ENCODE measurements at regions of chrX and their contacts with region 1.

Region 1: DNA sequence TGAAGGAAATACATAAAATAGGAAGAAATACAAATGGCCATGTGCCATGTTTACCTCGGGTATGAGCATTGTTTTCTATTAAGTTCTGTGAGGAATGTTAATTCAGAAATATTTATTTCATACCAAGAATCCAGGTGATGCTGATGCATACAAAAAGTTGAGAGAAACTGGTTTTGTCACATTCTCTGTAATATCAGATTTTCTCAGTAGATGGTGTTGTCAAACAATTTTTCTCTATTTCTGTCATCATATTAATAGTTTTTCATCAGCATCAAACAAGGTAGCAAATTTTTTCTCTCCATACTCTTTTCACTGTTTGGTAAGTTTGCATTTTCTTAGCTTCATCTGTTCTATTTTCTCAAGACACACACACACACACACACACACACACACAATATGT is 179.8 kb downstream of the KLHL4 start:
- DNase-seq: no peak
- ATAC-seq: no peak
- H3K4me3 ChIP-seq: no peak overlapping the region
- H3K27ac ChIP-seq: no peak overlapping the region
- H3K4me1 ChIP-seq: no peaks in the 10 kb centered on the region
- H3K27me3 ChIP-seq: no peaks in the 10 kb centered on the region
- CTCF ChIP-seq: peak in 1 of 12 donors; percentile 9
- POLR2A ChIP-seq: no peak

Region 2: DNA sequence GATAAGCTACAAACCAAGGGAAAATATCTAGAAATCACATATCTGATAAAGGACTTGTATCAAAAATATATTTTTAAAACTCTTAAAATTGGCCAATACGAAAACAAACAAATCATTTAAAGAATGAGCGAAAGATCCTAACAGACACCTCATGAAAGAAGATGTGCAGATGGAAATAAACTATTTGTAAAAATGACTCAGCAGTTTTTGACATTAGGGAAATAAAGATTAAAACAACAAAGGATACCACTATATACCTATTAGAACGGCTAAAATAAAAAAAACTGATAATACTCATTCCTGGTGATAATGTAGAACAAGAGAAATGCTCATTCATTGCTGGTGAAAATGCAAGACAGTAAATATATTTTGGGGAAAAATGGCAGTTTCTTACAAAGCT is 326.6 kb after region 1 on chrX:
- intact Hi-C with region 1: no loop called
- DNase-seq: no peak
- ATAC-seq: no peak
- H3K4me3 ChIP-seq: no peak overlapping the region
- H3K27ac ChIP-seq: no peak overlapping the region
- H3K4me1 ChIP-seq: no peaks in the 10 kb centered on the region
- H3K27me3 ChIP-seq: no peaks in the 10 kb centered on the region
- CTCF ChIP-seq: no peak
- POLR2A ChIP-seq: no peak

Region 3: GRCh38 chrX:88613338-88613737 is 915.9 kb after region 1 on chrX:
- intact Hi-C with region 1: loop called in 1 of 10 experiments (anchors 5 kb)
- DNase-seq: no peak
- ATAC-seq: no peak
- H3K4me3 ChIP-seq: peak overlapping the region in 1 of 12 donors; percentile 26
- H3K27ac ChIP-seq: no peak overlapping the region
- H3K4me1 ChIP-seq: no peaks in the 10 kb centered on the region
- H3K27me3 ChIP-seq: no peaks in the 10 kb centered on the region
- CTCF ChIP-seq: peak in 8 of 12 donors; percentile 10 to 42 (median 36)
- POLR2A ChIP-seq: no peak